CD4-positive, alpha-beta memory T cell (primary cell): ENCODE measurements at regions of chr4 and their contacts with region 1.

Region 1: DNA sequence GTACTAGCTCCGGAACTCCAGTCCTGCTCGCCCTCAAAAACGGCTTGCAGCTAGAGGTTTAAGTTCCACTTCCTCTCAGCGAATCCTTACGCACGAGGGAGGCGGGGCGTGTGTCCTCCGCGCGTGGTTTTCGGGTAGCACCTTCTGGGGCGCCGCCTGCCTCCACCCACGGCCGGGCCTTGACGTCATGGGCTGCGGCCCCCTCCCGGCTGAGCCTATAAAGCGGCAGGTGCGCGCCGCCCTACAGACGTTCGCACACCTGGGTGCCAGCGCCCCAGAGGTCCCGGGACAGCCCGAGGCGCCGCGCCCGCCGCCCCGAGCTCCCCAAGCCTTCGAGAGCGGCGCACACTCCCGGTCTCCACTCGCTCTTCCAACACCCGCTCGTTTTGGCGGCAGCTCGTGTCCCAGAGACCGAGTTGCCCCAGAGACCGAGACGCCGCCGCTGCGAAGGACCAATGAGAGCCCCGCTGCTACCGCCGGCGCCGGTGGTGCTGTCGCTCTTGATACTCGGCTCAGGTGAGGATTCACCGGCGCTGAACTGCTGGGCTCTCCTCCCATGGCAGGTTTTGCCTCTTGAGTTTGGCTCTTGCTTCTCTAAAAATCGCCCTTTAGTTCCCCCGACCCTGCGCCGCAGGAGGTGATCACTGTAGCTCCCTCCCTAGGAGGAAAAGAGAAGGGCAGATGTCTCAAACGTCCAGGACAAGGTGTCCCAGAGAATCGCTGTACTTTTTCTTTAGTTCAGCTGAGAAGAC is at the start of gene AREG:
- DNase-seq: peak; percentile 90 to 95 (median 92)
- H3K4me3 ChIP-seq: peak within 1 kb of the TSS; percentile 7 to 67
- H3K4me3 Mint-ChIP-seq: peak within 1 kb of the TSS; percentile 90 to 97 (median 94)
- H3K27ac ChIP-seq: peak within 1 kb of the TSS; percentile 84
- H3K27ac Mint-ChIP-seq: peak within 1 kb of the TSS; percentile 93 to 99 (median 97)
- H3K4me1 ChIP-seq: peaks cover 10% of the 10 kb centered on the region
- H3K4me1 Mint-ChIP-seq: peaks cover 5 to 14% (median 9%) of the 10 kb centered on the region in 4 donors
- H3K27me3 ChIP-seq: no peaks in the 10 kb centered on the region
- H3K27me3 Mint-ChIP-seq: peaks cover 0 to 2% of the 10 kb centered on the region in 2 donors
- total RNA-seq, gene AREG: 0.44 to 0.52 TPM

Region 2: GRCh38 chr4:74157561-74158465 is 287.3 kb before region 1 on chr4 and contains the start of gene MTHFD2L:
- CTCF ChIA-PET with region 1: no interaction called
- POLR2A ChIA-PET with region 1: no interaction called
- intact Hi-C with region 1: loop called (anchors 5 kb)
- DNase-seq: peak; percentile 72 to 81 (median 79)
- H3K4me3 ChIP-seq: peak within 1 kb of the TSS; percentile 55 to 58
- H3K4me3 Mint-ChIP-seq: peak within 1 kb of the TSS; percentile 89 to 95 (median 92)
- H3K27ac ChIP-seq: peak within 1 kb of the TSS; percentile 42
- H3K27ac Mint-ChIP-seq: peak within 1 kb of the TSS; percentile 49 to 95 (median 90)
- H3K4me1 ChIP-seq: peaks cover 17% of the 10 kb centered on the region
- H3K4me1 Mint-ChIP-seq: peaks cover 13 to 27% (median 17%) of the 10 kb centered on the region in 4 donors
- H3K27me3 ChIP-seq: no peaks in the 10 kb centered on the region
- H3K27me3 Mint-ChIP-seq: no peaks in the 10 kb centered on the region
- total RNA-seq, gene MTHFD2L: 7.5 to 7.6 TPM

Region 3: DNA sequence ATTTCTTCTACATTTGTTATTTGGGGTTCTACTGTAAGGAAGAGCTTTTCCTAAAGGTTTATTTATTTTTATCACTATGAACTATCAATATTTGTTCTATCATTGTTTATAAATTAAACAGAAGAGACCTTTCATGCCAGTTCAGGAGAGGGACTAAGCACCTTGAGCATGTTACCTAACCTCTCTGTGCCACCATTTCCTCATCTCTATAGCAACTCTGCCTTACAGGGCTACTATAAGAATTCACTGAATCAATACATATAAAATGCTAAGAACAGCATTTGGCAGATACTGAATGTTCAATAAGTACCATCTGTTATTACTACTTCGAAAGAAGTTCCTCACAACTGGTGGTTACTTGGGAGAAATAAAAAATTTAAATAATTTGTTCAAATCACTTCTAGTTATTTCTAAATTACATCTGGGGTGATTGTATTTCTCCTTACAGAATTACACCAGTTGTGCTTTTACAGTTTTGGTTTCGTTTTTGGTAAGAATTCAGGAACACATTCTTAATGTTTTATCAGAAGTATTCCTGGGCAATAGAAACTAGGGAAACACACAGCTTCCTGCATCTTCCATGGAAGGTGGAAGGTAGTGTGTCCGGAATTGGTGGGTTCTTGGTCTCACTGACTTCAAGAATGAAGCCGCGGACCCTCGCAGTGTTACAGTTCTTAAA is 47.2 kb before region 1 on chr4:
- CTCF ChIA-PET with region 1: interaction called, 12 read pairs
- POLR2A ChIA-PET with region 1: interaction called, 43 read pairs
- intact Hi-C with region 1: loop called (anchors 1 kb)
- DNase-seq: peak in 1 of 5 donors; percentile 19
- H3K4me3 ChIP-seq: peak overlapping the region; percentile 62 to 66
- H3K4me3 Mint-ChIP-seq: peak overlapping the region; percentile 94 to 100 (median 98)
- H3K27ac ChIP-seq: peak overlapping the region; percentile 71
- H3K27ac Mint-ChIP-seq: peak overlapping the region; percentile 95 to 100 (median 98)
- H3K4me1 ChIP-seq: peaks cover 6% of the 10 kb centered on the region
- H3K4me1 Mint-ChIP-seq: peaks cover 0 to 14% (median 6%) of the 10 kb centered on the region in 4 donors
- H3K27me3 ChIP-seq: no peaks in the 10 kb centered on the region
- H3K27me3 Mint-ChIP-seq: no peaks in the 10 kb centered on the region